Natural killer cell (primary cell): ENCODE measurements at regions of chr17 and their contacts with region 1.

Region 1: GRCh38 chr17:39057701-39058206 is 90.6 kb upstream of the FBXO47 start:
- DNase-seq: no peak
- ATAC-seq: no peak
- H3K4me3 ChIP-seq: no peak overlapping the region
- H3K4me3 Mint-ChIP-seq: peak overlapping the region; percentile 81
- H3K27ac ChIP-seq: no peak overlapping the region
- H3K27ac Mint-ChIP-seq: peak overlapping the region in 1 of 2 donors; percentile 58
- H3K4me1 ChIP-seq: peaks cover 13% of the 10 kb centered on the region
- H3K4me1 Mint-ChIP-seq: peaks cover 6 to 7% of the 10 kb centered on the region in 2 donors
- H3K27me3 ChIP-seq: no peaks in the 10 kb centered on the region
- H3K27me3 Mint-ChIP-seq: peaks cover under 1 to 4% of the 10 kb centered on the region in 2 donors
- CTCF ChIP-seq: no peak

Region 2: GRCh38 chr17:39094607-39095308 is 37.0 kb after region 1 on chr17:
- intact Hi-C with region 1: loop called (anchors 5 kb)
- DNase-seq: peak; percentile 51 to 67
- ATAC-seq: peak; percentile 69 to 79 (median 72)
- H3K4me3 ChIP-seq: peak overlapping the region; percentile 24
- H3K4me3 Mint-ChIP-seq: peak overlapping the region; percentile 89
- H3K27ac ChIP-seq: peak overlapping the region; percentile 83
- H3K27ac Mint-ChIP-seq: peak overlapping the region; percentile 90 to 94
- H3K4me1 ChIP-seq: peaks cover 92% of the 10 kb centered on the region
- H3K4me1 Mint-ChIP-seq: peaks cover 82 to 86% of the 10 kb centered on the region in 2 donors
- H3K27me3 ChIP-seq: no peaks in the 10 kb centered on the region
- H3K27me3 Mint-ChIP-seq: no peaks in the 10 kb centered on the region
- CTCF ChIP-seq: no peak